GM12878 (cell line): ENCODE measurements at regions of chr3 and their contacts with region 1.

Region 1: DNA sequence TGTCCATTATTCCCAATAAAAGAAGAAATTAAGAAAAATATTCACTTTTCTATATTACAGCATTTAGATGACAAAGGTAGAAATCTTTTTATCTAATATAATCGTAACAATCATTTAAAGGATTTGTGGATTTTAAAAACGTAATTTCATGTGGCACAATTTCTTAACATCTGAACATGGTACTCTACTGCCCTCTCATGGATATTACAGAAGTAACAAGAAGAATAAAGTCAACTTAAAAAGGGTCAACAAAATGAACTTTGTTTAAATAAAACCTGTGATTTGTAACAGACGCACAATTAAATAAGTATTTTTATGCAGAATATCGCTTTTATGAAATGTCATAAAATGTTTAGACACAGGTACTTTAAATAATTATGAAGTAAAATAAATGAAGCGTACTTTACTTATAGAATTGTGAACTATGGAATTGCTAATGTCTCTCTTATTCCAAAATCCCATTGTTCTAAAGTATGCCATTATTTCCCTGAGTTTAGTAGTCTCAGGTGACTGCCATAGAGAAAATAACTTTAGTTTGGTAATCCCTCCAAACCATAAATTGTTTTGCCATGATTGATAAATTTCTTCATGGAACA is 366.8 kb upstream of the ZNF385D start:
- DNase-seq: no peak
- ATAC-seq: no peak
- H3K4me3 ChIP-seq: no peak overlapping the region
- H3K27ac ChIP-seq: no peak overlapping the region
- H3K4me1 ChIP-seq: no peaks in the 10 kb centered on the region
- H3K27me3 ChIP-seq: no peaks in the 10 kb centered on the region
- CTCF ChIP-seq: peak in 2 of 3 experiments; percentile 39 to 40; a peak in 3 of 6 replicates
- EP300 ChIP-seq: no peak
- POLR2A ChIP-seq: no peak
- RAD21 ChIP-seq: peak; percentile 66

Region 2: GRCh38 chr3:21484057-21484827 is 633.6 kb before region 1 on chr3:
- CTCF ChIA-PET with region 1: no interaction called
- POLR2A ChIA-PET with region 1: no interaction called
- RAD21 ChIA-PET with region 1: no interaction called
- SMC1A ChIA-PET with region 1: interaction called, 6 read pairs
- in situ Hi-C with region 1: no loop called
- intact Hi-C with region 1: loop called (anchors 2 kb)
- DNase-seq: peak; percentile 4
- ATAC-seq: peak; percentile 96
- H3K4me3 ChIP-seq: no peak overlapping the region
- H3K27ac ChIP-seq: no peak overlapping the region
- H3K4me1 ChIP-seq: no peaks in the 10 kb centered on the region
- H3K27me3 ChIP-seq: no peaks in the 10 kb centered on the region
- CTCF ChIP-seq: peak; percentile 62 to 69 (median 67)
- EP300 ChIP-seq: no peak
- POLR2A ChIP-seq: no peak
- RAD21 ChIP-seq: peak; percentile 69

Region 3: DNA sequence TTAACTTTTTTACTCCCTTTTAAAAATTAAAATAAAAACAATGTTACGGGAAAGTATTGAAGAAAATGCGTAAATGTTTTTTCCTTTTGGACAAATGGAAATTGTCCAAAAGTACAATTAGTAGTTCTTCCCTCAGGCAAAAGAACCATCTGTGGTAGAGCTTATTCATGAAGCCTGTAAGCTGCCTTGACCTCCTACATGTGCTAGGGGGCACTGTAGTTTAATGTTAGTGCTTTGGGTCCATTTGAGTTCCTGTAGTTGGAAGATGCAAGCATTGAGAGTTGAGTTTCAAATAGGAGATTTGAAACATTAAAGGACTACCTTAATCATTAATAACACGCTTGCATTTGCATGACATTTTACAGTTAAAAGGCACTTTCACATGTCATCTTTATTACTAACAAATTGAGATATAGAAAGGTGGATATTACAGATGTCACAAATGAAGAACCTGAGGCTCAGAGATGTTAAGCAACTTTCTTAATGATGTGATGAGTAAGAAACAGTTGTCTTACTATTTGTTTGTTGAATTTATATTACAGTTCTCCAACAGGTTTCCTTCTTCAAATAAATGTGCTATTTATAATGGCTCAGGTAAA is 365.0 kb before region 1 on chr3:
- CTCF ChIA-PET with region 1: interaction called, 10 read pairs
- POLR2A ChIA-PET with region 1: no interaction called
- RAD21 ChIA-PET with region 1: interaction called, 11 read pairs
- SMC1A ChIA-PET with region 1: interaction called, 4 read pairs
- in situ Hi-C with region 1: no loop called
- intact Hi-C with region 1: loop called (anchors 2 kb)
- DNase-seq: no peak
- ATAC-seq: peak; percentile 86
- H3K4me3 ChIP-seq: no peak overlapping the region
- H3K27ac ChIP-seq: no peak overlapping the region
- H3K4me1 ChIP-seq: no peaks in the 10 kb centered on the region
- H3K27me3 ChIP-seq: no peaks in the 10 kb centered on the region
- CTCF ChIP-seq: peak; percentile 32 to 60 (median 51); a peak in 5 of 6 replicates
- EP300 ChIP-seq: no peak
- POLR2A ChIP-seq: no peak
- RAD21 ChIP-seq: peak; percentile 35

Region 4: GRCh38 chr3:21876782-21877181 is 241.1 kb before region 1 on chr3:
- CTCF ChIA-PET with region 1: no interaction called
- POLR2A ChIA-PET with region 1: no interaction called
- RAD21 ChIA-PET with region 1: no interaction called
- SMC1A ChIA-PET with region 1: no interaction called
- in situ Hi-C with region 1: no loop called
- intact Hi-C with region 1: no loop called
- DNase-seq: no peak
- ATAC-seq: no peak
- H3K4me3 ChIP-seq: no peak overlapping the region
- H3K27ac ChIP-seq: no peak overlapping the region
- H3K4me1 ChIP-seq: no peaks in the 10 kb centered on the region
- H3K27me3 ChIP-seq: no peaks in the 10 kb centered on the region
- CTCF ChIP-seq: no peak
- EP300 ChIP-seq: no peak
- POLR2A ChIP-seq: no peak
- RAD21 ChIP-seq: no peak

Region 5: GRCh38 chr3:21979706-21980105 is 138.1 kb before region 1 on chr3:
- CTCF ChIA-PET with region 1: no interaction called
- POLR2A ChIA-PET with region 1: no interaction called
- RAD21 ChIA-PET with region 1: no interaction called
- SMC1A ChIA-PET with region 1: no interaction called
- in situ Hi-C with region 1: no loop called
- intact Hi-C with region 1: no loop called
- DNase-seq: no peak
- ATAC-seq: no peak
- H3K4me3 ChIP-seq: no peak overlapping the region
- H3K27ac ChIP-seq: no peak overlapping the region
- H3K4me1 ChIP-seq: no peaks in the 10 kb centered on the region
- H3K27me3 ChIP-seq: no peaks in the 10 kb centered on the region
- CTCF ChIP-seq: no peak
- EP300 ChIP-seq: no peak
- POLR2A ChIP-seq: no peak
- RAD21 ChIP-seq: no peak

Region 6: DNA sequence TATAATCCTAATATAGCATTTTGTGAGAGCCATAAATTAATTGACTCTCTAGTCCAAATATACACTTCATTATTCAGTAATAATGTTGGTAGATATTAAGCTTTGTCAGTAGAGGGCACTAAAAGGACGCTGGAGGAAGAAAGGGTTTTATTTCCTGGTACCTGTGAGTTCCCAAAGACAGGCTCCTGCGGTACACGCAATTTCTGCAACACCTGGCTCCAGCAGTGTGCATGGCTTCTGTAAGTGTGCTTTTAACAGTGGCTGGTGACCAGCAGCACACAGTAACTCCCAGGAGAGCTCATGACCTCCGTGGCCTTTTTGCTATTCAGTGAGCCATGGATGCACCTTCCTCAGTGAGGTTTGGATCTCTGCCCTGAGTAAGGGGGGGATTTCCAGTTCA is 28.6 kb before region 1 on chr3:
- CTCF ChIA-PET with region 1: interaction called, 75 read pairs
- POLR2A ChIA-PET with region 1: no interaction called
- RAD21 ChIA-PET with region 1: interaction called, 39 read pairs
- SMC1A ChIA-PET with region 1: interaction called, 58 read pairs
- in situ Hi-C with region 1: no loop called
- intact Hi-C with region 1: loop called (anchors 1 kb)
- DNase-seq: peak; percentile 34
- ATAC-seq: peak; percentile 88
- H3K4me3 ChIP-seq: no peak overlapping the region
- H3K27ac ChIP-seq: no peak overlapping the region
- H3K4me1 ChIP-seq: no peaks in the 10 kb centered on the region
- H3K27me3 ChIP-seq: no peaks in the 10 kb centered on the region
- CTCF ChIP-seq: peak; percentile 39 to 63 (median 47); a peak in 4 of 6 replicates
- EP300 ChIP-seq: no peak
- POLR2A ChIP-seq: no peak
- RAD21 ChIP-seq: peak; percentile 61

Region 7: GRCh38 chr3:22175947-22176346 is 58.1 kb after region 1 on chr3:
- CTCF ChIA-PET with region 1: no interaction called
- POLR2A ChIA-PET with region 1: no interaction called
- RAD21 ChIA-PET with region 1: interaction called, 3 read pairs
- SMC1A ChIA-PET with region 1: interaction called, 11 read pairs
- in situ Hi-C with region 1: no loop called
- intact Hi-C with region 1: no loop called
- DNase-seq: no peak
- ATAC-seq: no peak
- H3K4me3 ChIP-seq: no peak overlapping the region
- H3K27ac ChIP-seq: no peak overlapping the region
- H3K4me1 ChIP-seq: no peaks in the 10 kb centered on the region
- H3K27me3 ChIP-seq: no peaks in the 10 kb centered on the region
- CTCF ChIP-seq: no peak; a peak in 1 of 6 replicates
- EP300 ChIP-seq: no peak
- POLR2A ChIP-seq: no peak
- RAD21 ChIP-seq: 0 out of 2 replicates have a peak, but pooled peaks have one; percentile 5

Region 8: DNA sequence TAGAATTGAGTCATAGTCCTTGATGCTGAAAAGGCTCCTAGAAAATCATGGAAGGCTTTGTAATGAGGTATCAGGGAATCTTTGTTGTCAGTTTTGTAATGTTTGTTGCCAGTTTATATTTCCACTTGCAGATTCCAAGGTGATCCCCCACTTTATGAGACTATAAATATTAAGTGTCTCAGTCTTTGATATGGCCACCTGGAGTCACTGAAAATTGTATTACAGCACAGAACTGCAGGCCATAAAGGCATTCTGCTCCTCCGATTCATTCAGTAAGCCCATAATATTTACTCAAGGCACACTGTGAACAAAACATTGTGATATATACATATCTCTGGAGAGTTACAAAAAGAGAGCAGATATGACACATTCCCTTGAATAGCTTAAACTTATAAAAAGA is 91.0 kb after region 1 on chr3:
- CTCF ChIA-PET with region 1: no interaction called
- POLR2A ChIA-PET with region 1: no interaction called
- RAD21 ChIA-PET with region 1: no interaction called
- SMC1A ChIA-PET with region 1: no interaction called
- in situ Hi-C with region 1: no loop called
- intact Hi-C with region 1: no loop called
- DNase-seq: no peak
- ATAC-seq: no peak
- H3K4me3 ChIP-seq: no peak overlapping the region
- H3K27ac ChIP-seq: no peak overlapping the region
- H3K4me1 ChIP-seq: no peaks in the 10 kb centered on the region
- H3K27me3 ChIP-seq: no peaks in the 10 kb centered on the region
- CTCF ChIP-seq: no peak
- EP300 ChIP-seq: no peak
- POLR2A ChIP-seq: no peak
- RAD21 ChIP-seq: no peak

Region 9: GRCh38 chr3:22474706-22475445 is 357.0 kb after region 1 on chr3:
- CTCF ChIA-PET with region 1: no interaction called
- POLR2A ChIA-PET with region 1: no interaction called
- RAD21 ChIA-PET with region 1: no interaction called
- SMC1A ChIA-PET with region 1: no interaction called
- in situ Hi-C with region 1: no loop called
- intact Hi-C with region 1: no loop called
- DNase-seq: no peak
- ATAC-seq: peak; percentile 44
- H3K4me3 ChIP-seq: no peak overlapping the region
- H3K27ac ChIP-seq: no peak overlapping the region
- H3K4me1 ChIP-seq: no peaks in the 10 kb centered on the region
- H3K27me3 ChIP-seq: no peaks in the 10 kb centered on the region
- CTCF ChIP-seq: no peak
- EP300 ChIP-seq: no peak
- POLR2A ChIP-seq: no peak
- RAD21 ChIP-seq: no peak